CD4-positive, alpha-beta T cell (primary cell): ENCODE measurements at regions of chr19 and their contacts with region 1.

Region 1: DNA sequence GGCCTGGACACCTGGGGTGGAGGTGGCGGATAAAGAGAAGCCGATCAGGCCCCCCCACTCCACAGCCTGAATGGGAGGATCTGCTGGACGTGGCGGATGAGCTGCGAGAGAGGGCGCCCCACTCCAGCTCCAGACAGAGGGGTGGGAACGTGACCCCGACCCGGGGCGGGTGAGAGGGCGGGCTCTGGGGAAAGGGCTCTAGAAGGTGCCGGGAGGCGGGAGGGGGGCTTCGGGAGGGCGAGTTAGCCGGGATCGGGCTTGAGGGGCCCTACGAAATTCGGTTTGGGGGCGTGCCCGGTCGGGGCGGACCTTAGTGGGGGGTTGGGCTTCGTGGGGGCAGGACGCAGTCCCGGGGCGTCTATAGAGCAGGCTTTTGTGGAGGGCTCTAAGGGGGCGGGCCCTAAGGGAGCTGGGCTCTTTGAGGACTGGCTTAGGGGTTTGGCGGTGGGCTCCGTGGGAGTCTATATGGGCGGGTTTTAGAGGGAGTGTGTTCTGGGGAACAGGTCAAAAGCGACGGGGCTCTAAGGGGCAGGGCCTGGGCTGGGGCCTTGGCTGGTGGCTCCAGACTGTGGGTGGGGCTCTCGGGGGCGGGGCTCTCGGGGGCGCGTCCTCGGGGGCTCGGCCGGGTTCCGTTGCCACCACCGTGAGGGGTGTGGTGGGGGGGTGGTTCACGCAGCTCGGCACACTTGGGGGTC is 4.1 kb upstream of the NANOS3 start:
- DNase-seq: peak in 3 of 14 experiments; percentile 36 to 63 (median 52)
- ATAC-seq: peak; percentile 83
- H3K4me3 ChIP-seq: peak overlapping the region; percentile 24
- H3K4me3 Mint-ChIP-seq: peak overlapping the region; percentile 65
- H3K27ac ChIP-seq: no peak overlapping the region
- H3K27ac Mint-ChIP-seq: no peak overlapping the region
- H3K4me1 ChIP-seq: peaks cover 12% of the 10 kb centered on the region
- H3K4me1 Mint-ChIP-seq: peaks cover 8% of the 10 kb centered on the region
- H3K27me3 ChIP-seq: peaks cover 3 to 21% of the 10 kb centered on the region in 2 experiments
- H3K27me3 Mint-ChIP-seq: peaks cover 39% of the 10 kb centered on the region
- CTCF ChIP-seq: no peak

Region 2: GRCh38 chr19:13207846-13208671 is 664.8 kb before region 1 on chr19:
- CTCF ChIA-PET with region 1: no interaction called
- POLR2A ChIA-PET with region 1: no interaction called
- intact Hi-C with region 1: no loop called
- DNase-seq: peak in 13 of 14 experiments; percentile 30 to 77 (median 41)
- ATAC-seq: peak; percentile 63
- H3K4me3 ChIP-seq: peak overlapping the region; percentile 55
- H3K4me3 Mint-ChIP-seq: peak overlapping the region; percentile 97
- H3K27ac ChIP-seq: peak overlapping the region in 1 of 2 donors; percentile 50
- H3K27ac Mint-ChIP-seq: peak overlapping the region; percentile 94
- H3K4me1 ChIP-seq: peaks cover 19% of the 10 kb centered on the region
- H3K4me1 Mint-ChIP-seq: peaks cover 17% of the 10 kb centered on the region
- H3K27me3 ChIP-seq: no peaks in the 10 kb centered on the region
- H3K27me3 Mint-ChIP-seq: no peaks in the 10 kb centered on the region
- CTCF ChIP-seq: no peak

Region 3: DNA sequence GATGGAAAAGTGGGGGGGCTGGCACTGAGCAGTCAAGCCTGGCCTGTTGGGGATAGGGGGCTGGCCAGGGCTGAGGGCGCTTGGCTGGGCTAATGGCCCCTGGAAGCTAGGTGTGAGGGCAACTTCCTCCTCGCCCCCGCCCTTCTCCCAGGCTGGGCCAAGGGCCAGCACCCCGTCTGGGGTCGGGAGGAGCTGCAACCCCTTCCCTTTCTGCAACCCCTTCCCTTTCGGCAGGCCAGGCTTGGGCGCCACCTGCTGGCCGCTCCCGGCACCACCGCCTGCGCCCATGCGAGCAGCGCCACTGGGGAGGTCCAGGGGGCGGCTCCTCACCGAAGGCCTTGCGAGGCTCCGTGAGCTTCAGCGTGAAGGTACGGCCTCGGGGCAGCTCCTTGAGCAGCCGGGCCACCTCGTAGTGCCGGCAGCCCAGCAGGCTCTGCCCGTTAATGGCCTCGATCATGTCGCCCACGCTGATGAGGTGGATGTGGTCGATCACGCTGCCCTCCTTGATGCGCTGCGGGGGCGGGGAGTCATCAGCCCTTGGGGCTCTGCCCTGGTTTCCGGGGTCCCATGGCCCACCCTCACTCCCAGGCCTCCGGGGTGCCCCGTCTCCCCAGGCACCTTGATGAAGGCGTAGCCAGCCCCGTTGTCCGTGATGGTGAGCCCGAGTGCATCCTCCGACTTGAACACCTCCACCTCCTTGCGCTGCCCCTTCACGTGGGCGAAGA is 607.3 kb after region 1 on chr19:
- CTCF ChIA-PET with region 1: no interaction called
- POLR2A ChIA-PET with region 1: no interaction called
- intact Hi-C with region 1: loop called in 1 of 2 experiments (anchors 10 kb)
- DNase-seq: peak; percentile 45 to 82 (median 64)
- ATAC-seq: peak; percentile 62
- H3K4me3 ChIP-seq: no peak overlapping the region
- H3K4me3 Mint-ChIP-seq: no peak overlapping the region
- H3K27ac ChIP-seq: no peak overlapping the region
- H3K27ac Mint-ChIP-seq: no peak overlapping the region
- H3K4me1 ChIP-seq: peaks cover 21% of the 10 kb centered on the region
- H3K4me1 Mint-ChIP-seq: peaks cover 15% of the 10 kb centered on the region
- H3K27me3 ChIP-seq: peaks cover under 1 to 3% of the 10 kb centered on the region in 2 experiments
- H3K27me3 Mint-ChIP-seq: peaks cover 13% of the 10 kb centered on the region
- CTCF ChIP-seq: peak; percentile 87